ENCODE measurements at regions of chr12 and their contacts with region 1.

Region 1: GRCh38 chr12:56630160-56630632 is at the start of gene BAZ2A:
- DNase-seq: peak; percentile 68 to 88 (median 78)
- ATAC-seq: peak; percentile 68 to 74
- H3K4me3 Mint-ChIP-seq: peak within 1 kb of the TSS; percentile 83 to 99 (median 94)
- H3K27ac Mint-ChIP-seq: peak within 1 kb of the TSS; percentile 89 to 97 (median 95)
- H3K4me1 Mint-ChIP-seq: peaks cover 36 to 83% (median 76%) of the 10 kb centered on the region in 4 donors
- H3K27me3 Mint-ChIP-seq: no peaks in the 10 kb centered on the region
- polyA plus RNA-seq, gene BAZ2A: 14.3 to 29.5 (median 24.1) TPM

Region 2: DNA sequence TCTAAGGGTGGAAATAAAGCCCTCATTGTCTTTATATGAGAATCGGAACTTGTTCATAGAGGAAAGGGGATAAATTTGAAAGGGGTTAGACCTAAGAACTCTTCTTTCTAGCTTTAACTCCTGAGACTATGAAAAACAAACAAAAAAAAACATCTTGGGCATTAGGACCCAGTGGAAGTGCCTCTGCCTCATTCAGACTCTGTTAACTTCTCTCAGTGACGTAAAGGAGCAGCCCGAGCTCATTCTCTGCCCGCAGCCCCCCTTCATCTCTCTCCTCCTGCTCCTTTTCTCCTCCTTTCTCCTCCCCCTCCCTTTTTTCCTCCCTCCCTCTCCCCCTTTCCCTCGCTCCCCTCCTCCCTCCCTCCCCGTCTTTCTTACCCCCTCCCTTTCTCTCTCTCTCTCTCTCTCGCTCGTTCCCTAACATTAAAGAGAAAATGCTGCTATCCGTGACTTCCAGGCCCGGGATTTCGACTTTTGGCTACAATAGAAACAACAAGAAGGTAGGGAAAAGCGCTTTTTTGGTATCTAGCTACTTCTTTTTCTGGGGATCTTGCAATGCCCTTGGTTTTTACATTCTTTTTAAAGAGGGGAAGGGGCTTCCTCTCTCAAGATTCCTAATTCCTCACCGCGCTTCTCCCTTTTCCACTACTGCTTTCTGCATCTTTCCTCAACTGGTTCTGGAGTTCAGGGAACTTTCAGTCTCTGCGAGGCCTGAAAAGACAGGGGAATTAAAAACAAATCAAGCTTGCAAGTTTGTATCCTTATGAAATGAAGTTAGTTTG is 108.4 kb before region 1 on chr12 and contains the start of gene RBMS2:
- POLR2A ChIA-PET with region 1: interaction called, 28 read pairs
- DNase-seq: peak; percentile 22 to 73 (median 52)
- ATAC-seq: peak; percentile 96 to 98
- H3K4me3 Mint-ChIP-seq: peak within 1 kb of the TSS; percentile 84 to 98 (median 88)
- H3K27ac Mint-ChIP-seq: peak within 1 kb of the TSS; percentile 77 to 99 (median 92)
- H3K4me1 Mint-ChIP-seq: peaks cover 19 to 44% (median 35%) of the 10 kb centered on the region in 4 donors
- H3K27me3 Mint-ChIP-seq: no peaks in the 10 kb centered on the region
- polyA plus RNA-seq, gene RBMS2: 1.2 to 6.2 (median 2.2) TPM

Region 3: DNA sequence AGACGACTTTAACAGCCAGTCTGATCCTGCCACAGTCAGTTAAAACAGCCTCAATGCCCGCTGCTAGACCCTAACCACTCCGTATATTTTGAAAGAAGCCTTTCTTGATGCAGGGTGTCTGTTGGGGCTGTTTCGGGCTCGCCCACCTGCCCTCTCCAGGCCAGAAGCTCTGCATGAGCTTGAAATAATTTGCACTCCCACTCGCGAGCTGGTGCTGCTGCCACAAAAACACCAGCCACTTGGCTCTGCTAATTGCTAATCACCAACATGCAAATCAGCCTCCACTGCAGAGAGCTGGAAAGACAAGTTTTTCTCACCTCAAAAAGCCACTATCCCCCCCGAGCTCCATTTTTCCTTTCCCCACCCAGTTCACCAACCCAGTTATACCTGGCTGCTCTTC is 15.6 kb before region 1 on chr12:
- POLR2A ChIA-PET with region 1: interaction called, 11 read pairs
- DNase-seq: no peak
- ATAC-seq: no peak
- H3K4me3 Mint-ChIP-seq: no peak overlapping the region
- H3K27ac Mint-ChIP-seq: peak overlapping the region in 2 of 10 donors; percentile 28 to 43
- H3K4me1 Mint-ChIP-seq: peaks cover 12 to 25% (median 19%) of the 10 kb centered on the region in 4 donors
- H3K27me3 Mint-ChIP-seq: no peaks in the 10 kb centered on the region

Region 4: DNA sequence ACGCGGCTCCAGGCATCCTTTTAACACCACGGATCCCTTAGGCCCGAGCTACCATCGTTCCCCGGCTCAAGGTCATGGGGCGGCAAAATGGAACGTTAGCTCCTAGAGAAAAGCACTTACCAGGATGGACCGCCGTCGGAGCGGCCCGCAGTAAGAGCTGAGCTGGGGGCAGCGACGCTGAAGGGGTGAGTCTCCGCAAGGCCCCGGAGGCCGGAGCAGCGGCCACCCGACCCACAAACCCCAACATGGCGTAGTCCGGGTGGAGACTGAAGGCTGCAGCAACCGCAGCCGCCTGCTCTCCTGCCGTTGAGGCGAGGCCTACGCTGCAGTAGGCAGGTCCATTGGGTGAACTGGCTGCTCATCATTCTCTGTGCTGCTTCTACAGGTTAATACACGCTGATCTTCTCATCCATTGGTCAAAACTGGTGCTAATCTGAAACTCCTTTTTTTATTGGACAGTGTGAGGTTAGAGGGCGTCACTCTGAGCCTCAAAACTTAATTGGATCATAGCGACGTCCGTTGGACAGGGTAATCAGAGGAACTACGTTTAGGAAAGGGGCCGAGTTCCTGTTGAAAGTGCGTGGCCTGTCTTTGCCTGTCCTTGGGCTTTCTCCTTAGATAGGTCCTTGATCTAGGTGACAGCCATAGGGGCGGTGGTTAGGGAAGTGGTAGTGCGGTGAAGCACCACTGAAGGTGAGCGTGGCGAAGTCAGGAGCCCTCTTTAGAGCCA is 15.7 kb after region 1 on chr12 and contains the start of gene ATP5F1B:
- POLR2A ChIA-PET with region 1: interaction called, 74 read pairs
- DNase-seq: peak; percentile 75 to 97 (median 89)
- ATAC-seq: peak; percentile 93 to 97
- H3K4me3 Mint-ChIP-seq: peak within 1 kb of the TSS; percentile 79 to 98 (median 95)
- H3K27ac Mint-ChIP-seq: peak within 1 kb of the TSS; percentile 90 to 100 (median 98)
- H3K4me1 Mint-ChIP-seq: peaks cover 11 to 42% (median 39%) of the 10 kb centered on the region in 4 donors
- H3K27me3 Mint-ChIP-seq: no peaks in the 10 kb centered on the region
- polyA plus RNA-seq, gene ATP5F1B: 724 to 879 (median 771) TPM

Measured in naive thymus-derived CD8-positive, alpha-beta T cell (primary cell).